K562 (cell line): ENCODE measurements at regions of chr10 and their contacts with region 1.

Region 1: DNA sequence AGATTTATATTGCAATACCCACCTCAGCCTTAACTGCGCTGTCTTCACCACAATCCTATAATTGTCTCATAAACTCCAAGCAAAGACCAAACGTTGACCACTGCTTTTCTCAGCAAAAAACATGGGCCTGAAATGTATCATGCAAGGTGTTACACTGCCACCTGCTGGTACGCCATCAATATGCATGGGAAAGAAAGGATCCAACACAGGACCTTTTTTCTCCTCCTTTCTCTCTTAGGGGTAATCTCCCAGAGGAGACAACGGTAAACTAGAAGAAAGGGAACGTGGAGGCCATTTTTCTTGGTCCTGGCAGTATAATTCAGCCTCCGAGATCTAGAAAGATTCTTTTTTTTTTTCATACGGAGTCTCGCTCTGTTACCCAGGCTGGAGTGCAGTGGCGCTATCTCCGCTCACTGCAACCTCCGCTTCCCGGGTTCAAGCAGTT is 79.1 kb upstream of the MPP7 start:
- DNase-seq: peak; percentile 53 to 80 (median 58)
- ATAC-seq: peak; percentile 96
- H3K4me3 ChIP-seq: no peak overlapping the region
- H3K27ac ChIP-seq: no peak overlapping the region
- H3K4me1 ChIP-seq: peaks cover 0 to 3% of the 10 kb centered on the region in 2 experiments; a peak in 2 of 5 replicates
- H3K27me3 ChIP-seq: peaks cover 4 to 9% of the 10 kb centered on the region in 2 experiments; a peak in 2 of 5 replicates
- CTCF ChIP-seq: peak; percentile 80 to 96 (median 93)
- EP300 ChIP-seq: no peak
- POLR2A ChIP-seq: no peak
- RAD21 ChIP-seq: peak; percentile 90 to 95

Region 2: GRCh38 chr10:27360581-27361172 is 1021.2 kb before region 1 on chr10:
- CTCF ChIA-PET with region 1: no interaction called
- POLR2A ChIA-PET with region 1: no interaction called
- in situ Hi-C with region 1: no loop called
- intact Hi-C with region 1: loop called (anchors 10 kb)
- DNase-seq: peak; percentile 59 to 86 (median 68)
- ATAC-seq: peak; percentile 96
- H3K4me3 ChIP-seq: no peak overlapping the region
- H3K27ac ChIP-seq: no peak overlapping the region
- H3K4me1 ChIP-seq: no peaks in the 10 kb centered on the region
- H3K27me3 ChIP-seq: no peaks in the 10 kb centered on the region; a peak in 1 of 5 replicates
- CTCF ChIP-seq: peak; percentile 87 to 94 (median 87)
- EP300 ChIP-seq: no peak
- POLR2A ChIP-seq: no peak
- RAD21 ChIP-seq: peak; percentile 88 to 91

Region 3: GRCh38 chr10:27558612-27559020 is 823.3 kb before region 1 on chr10:
- CTCF ChIA-PET with region 1: no interaction called
- POLR2A ChIA-PET with region 1: no interaction called
- in situ Hi-C with region 1: loop called (anchors 10 kb)
- intact Hi-C with region 1: loop called (anchors 5 kb)
- DNase-seq: peak; percentile 27 to 78 (median 46)
- ATAC-seq: peak; percentile 94
- H3K4me3 ChIP-seq: no peak overlapping the region
- H3K27ac ChIP-seq: no peak overlapping the region
- H3K4me1 ChIP-seq: no peaks in the 10 kb centered on the region
- H3K27me3 ChIP-seq: no peaks in the 10 kb centered on the region; a peak in 1 of 5 replicates
- CTCF ChIP-seq: peak; percentile 74 to 85 (median 75)
- EP300 ChIP-seq: no peak
- POLR2A ChIP-seq: no peak
- RAD21 ChIP-seq: peak; percentile 73 to 84

Region 4: DNA sequence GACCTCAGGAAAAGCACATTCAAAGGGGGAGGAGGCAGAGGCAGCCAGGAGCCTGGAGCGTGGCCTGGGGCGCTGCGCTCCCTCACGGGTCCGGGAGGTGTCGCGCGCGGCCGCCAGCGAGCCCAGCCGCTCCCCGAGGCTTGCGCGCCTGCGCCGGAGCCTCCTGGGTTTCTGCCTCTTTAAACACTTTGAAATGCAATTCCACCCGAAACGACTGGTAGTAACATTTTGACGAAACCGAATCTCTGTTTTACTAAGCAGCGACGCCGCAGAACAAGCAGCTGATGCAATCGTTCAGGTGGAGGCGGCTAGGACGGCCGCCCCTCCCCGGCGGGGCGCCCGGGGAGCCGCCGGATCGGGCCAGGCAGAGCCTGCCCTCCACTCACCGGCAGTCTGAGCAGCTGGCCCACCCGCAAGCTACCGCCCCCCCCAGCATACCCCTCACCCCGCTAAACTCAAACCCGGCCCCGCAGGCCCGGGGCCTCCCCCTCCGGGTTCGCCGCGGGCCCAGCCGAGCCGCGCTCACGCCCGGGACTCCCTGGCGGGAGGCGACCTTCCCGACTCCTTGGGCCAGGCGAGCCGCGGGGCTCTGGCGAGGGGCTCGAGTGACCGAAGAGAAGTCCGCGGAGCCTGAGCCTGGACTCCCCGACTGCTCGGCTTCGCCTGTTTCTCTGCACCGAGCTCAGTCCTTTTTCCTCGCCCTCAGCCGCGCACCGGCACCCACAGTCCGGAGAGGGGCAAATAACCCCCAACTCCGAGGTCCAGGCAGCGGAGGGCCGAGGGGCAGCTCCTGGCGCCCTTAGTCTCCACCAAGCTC is 639.5 kb before region 1 on chr10:
- CTCF ChIA-PET with region 1: no interaction called
- POLR2A ChIA-PET with region 1: no interaction called
- in situ Hi-C with region 1: loop called (anchors 25 kb)
- intact Hi-C with region 1: no loop called
- DNase-seq: peak; percentile 74 to 78 (median 76)
- ATAC-seq: peak; percentile 100
- H3K4me3 ChIP-seq: peak overlapping the region; percentile 46
- H3K27ac ChIP-seq: no peak overlapping the region
- H3K4me1 ChIP-seq: peaks cover 0 to 21% of the 10 kb centered on the region in 2 experiments; a peak in 2 of 5 replicates
- H3K27me3 ChIP-seq: peaks cover 11 to 31% of the 10 kb centered on the region in 2 experiments
- CTCF ChIP-seq: peak; percentile 72 to 84 (median 75)
- EP300 ChIP-seq: no peak
- POLR2A ChIP-seq: no peak
- RAD21 ChIP-seq: peak; percentile 68

Region 5: GRCh38 chr10:28241741-28242399 is 140.1 kb before region 1 on chr10:
- CTCF ChIA-PET with region 1: no interaction called
- POLR2A ChIA-PET with region 1: no interaction called
- in situ Hi-C with region 1: no loop called
- intact Hi-C with region 1: loop called (anchors 1 kb)
- DNase-seq: peak; percentile 41 to 49 (median 46)
- ATAC-seq: peak; percentile 73
- H3K4me3 ChIP-seq: no peak overlapping the region
- H3K27ac ChIP-seq: no peak overlapping the region
- H3K4me1 ChIP-seq: no peaks in the 10 kb centered on the region
- H3K27me3 ChIP-seq: peaks cover 3 to 4% of the 10 kb centered on the region in 2 experiments; a peak in 4 of 5 replicates
- CTCF ChIP-seq: peak; percentile 55 to 85 (median 77); a peak in 5 of 6 replicates
- EP300 ChIP-seq: no peak
- POLR2A ChIP-seq: no peak
- RAD21 ChIP-seq: peak; percentile 72 to 78

Region 6: DNA sequence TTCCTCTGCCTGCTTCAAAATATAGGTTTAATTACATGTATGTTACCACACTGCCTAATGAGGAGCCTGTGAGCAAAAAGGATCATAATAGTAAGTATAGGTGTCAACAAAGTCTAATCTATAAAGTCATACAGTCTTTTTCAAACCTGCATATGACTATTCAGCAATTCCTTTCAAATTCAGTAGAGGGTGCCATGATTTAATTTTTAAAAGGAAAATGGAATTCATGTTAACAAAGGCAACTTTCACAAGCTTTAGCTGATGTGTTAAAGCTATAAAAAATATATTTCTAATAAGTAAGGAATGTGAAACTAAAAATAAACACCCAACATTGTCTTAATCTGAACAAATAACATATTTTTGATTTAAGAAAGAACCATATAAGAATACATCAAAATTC is 131.1 kb before region 1 on chr10:
- CTCF ChIA-PET with region 1: interaction called, 24 read pairs
- POLR2A ChIA-PET with region 1: no interaction called
- in situ Hi-C with region 1: loop called (anchors 5 kb)
- intact Hi-C with region 1: loop called (anchors 1 kb)
- DNase-seq: peak in 2 of 4 experiments; percentile 8 to 10
- ATAC-seq: 0 out of 3 replicates have a peak, but pooled peaks have one; percentile 31
- H3K4me3 ChIP-seq: no peak overlapping the region
- H3K27ac ChIP-seq: no peak overlapping the region
- H3K4me1 ChIP-seq: no peaks in the 10 kb centered on the region
- H3K27me3 ChIP-seq: peaks cover 2 to 3% of the 10 kb centered on the region in 2 experiments; a peak in 4 of 5 replicates
- CTCF ChIP-seq: peak in 2 of 3 experiments; percentile 17 to 59; a peak in 3 of 6 replicates
- EP300 ChIP-seq: no peak
- POLR2A ChIP-seq: no peak
- RAD21 ChIP-seq: peak; percentile 68 to 73

Region 7: DNA sequence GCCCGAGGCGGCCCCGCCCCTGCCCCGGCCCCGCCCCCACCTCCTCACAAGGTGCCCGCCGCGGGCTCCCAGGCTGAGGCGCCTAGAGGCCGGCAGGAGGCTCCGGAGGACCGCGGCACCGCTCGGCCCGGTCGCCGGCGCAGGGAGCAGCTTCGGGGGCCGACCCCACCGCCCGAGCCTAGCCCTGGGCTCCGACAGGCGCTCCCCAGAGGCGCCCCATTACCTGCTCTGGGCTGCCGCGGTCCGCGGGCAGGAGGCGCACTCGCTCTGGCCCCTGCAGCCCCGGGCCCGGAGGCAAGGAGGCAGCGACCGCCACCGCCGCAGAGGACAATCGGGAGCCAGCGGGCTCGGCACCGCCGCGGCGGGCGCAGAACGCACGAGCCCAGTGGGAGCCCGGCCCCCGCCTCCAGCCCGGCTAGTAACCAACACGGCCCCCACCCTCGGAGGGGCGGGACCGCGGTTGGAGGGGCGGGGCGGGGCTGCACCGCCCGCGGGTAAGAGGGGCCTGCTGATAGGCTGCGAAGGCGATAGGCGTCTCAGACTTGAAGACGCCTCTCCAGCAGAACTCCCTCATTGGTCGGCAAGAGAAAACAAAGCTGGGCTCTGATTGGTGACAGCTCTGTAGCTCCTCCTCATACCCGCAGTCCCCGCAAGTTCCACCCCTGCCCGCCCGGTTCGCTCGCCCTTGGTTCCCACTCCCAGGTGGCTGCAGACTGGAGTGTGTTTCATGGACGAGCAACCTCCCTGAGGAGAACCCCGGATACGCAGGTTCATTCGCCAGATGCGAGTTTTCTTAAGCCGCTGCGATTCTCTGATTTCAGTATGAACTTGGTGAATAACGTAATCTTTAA is 79.1 kb before region 1 on chr10 and contains the start of gene MPP7:
- CTCF ChIA-PET with region 1: interaction called, 8 read pairs
- POLR2A ChIA-PET with region 1: no interaction called
- in situ Hi-C with region 1: no loop called
- intact Hi-C with region 1: loop called (anchors 2 kb)
- DNase-seq: peak; percentile 96 to 99 (median 98)
- ATAC-seq: peak; percentile 100
- H3K4me3 ChIP-seq: peak within 1 kb of the TSS; percentile 68
- H3K27ac ChIP-seq: no peak within 1 kb of the TSS
- H3K4me1 ChIP-seq: peaks cover 3% of the 10 kb centered on the region in 2 experiments; a peak in 2 of 5 replicates
- H3K27me3 ChIP-seq: peaks cover 0 to 3% of the 10 kb centered on the region in 2 experiments; a peak in 2 of 5 replicates
- CTCF ChIP-seq: peak in 2 of 3 experiments; percentile 35 to 56; a peak in 3 of 6 replicates
- EP300 ChIP-seq: no peak
- POLR2A ChIP-seq: no peak
- RAD21 ChIP-seq: 0 out of 4 replicates have a peak, but pooled peaks have one; percentile 12 to 25
- polyA plus RNA-seq, gene MPP7: 0.03 TPM